Esophagus muscularis mucosa (tissue), 4 donors: ENCODE measurements at regions of chr7 and their contacts with region 1.

Region 1: DNA sequence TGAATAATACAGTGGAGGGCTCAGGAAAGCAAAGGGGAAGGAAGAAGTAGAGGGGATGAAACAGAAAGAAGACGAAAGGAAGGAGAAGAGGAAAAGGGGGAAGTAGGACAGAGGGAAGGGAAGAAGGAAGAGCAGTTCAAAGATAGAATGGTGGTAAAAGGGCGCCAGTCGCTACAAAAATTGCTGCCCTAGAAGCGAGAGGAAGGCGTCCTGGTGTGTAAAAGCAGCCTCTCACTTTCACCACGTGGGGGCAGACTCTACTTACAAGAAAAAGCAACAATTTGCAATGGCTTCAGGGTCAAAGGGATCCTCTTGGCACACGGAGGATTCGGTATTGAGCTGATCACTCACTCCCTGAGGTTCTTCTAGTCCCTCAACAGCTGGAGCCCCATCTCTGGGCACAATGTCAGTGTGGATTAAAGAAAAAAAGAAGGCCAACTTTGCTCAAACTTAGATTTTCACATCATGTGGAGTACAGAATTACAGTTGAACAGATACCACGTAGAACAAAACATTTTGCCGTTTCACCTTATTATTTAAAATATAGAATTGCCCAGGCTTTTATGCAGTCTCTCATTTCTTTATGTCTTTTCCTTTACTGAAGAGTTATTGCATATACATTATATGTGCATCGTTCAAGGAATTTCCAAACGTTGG is 31.4 kb upstream of the NPVF start:
- DNase-seq: no peak
- H3K4me3 ChIP-seq: no peak overlapping the region
- H3K27ac ChIP-seq: no peak overlapping the region
- H3K4me1 ChIP-seq: peaks cover 4 to 25% (median 24%) of the 10 kb centered on the region in 4 donors
- H3K27me3 ChIP-seq: no peaks in the 10 kb centered on the region
- CTCF ChIP-seq: peak; percentile 81 to 91 (median 89)
- EP300 ChIP-seq: no peak
- POLR2A ChIP-seq: no peak

Region 2: GRCh38 chr7:24366876-24367275 is 892.8 kb before region 1 on chr7:
- intact Hi-C with region 1: no loop called
- DNase-seq: no peak
- H3K4me3 ChIP-seq: no peak overlapping the region
- H3K27ac ChIP-seq: no peak overlapping the region
- H3K4me1 ChIP-seq: no peaks in the 10 kb centered on the region
- H3K27me3 ChIP-seq: no peaks in the 10 kb centered on the region
- CTCF ChIP-seq: no peak
- EP300 ChIP-seq: no peak
- POLR2A ChIP-seq: no peak

Region 3: GRCh38 chr7:25125137-25125946 is 134.4 kb before region 1 on chr7 and contains the start of gene CYCS:
- intact Hi-C with region 1: no loop called
- DNase-seq: peak; percentile 100
- H3K4me3 ChIP-seq: peak within 1 kb of the TSS; percentile 80 to 89 (median 84)
- H3K27ac ChIP-seq: peak within 1 kb of the TSS; percentile 95 to 97 (median 96)
- H3K4me1 ChIP-seq: peaks cover 10 to 22% (median 15%) of the 10 kb centered on the region in 4 donors
- H3K27me3 ChIP-seq: no peaks in the 10 kb centered on the region
- CTCF ChIP-seq: peak in 1 of 3 experiments; percentile 16
- EP300 ChIP-seq: peak; percentile 90
- POLR2A ChIP-seq: peak; percentile 95
- total RNA-seq, gene CYCS: 39.9 to 57.3 (median 44.6) TPM

Region 4: GRCh38 chr7:25389489-25390106 is 129.9 kb after region 1 on chr7:
- intact Hi-C with region 1: loop called (anchors 1 kb)
- DNase-seq: peak; percentile 53
- H3K4me3 ChIP-seq: no peak overlapping the region
- H3K27ac ChIP-seq: peak overlapping the region in 1 of 4 donors; percentile 12
- H3K4me1 ChIP-seq: peaks cover 5 to 78% (median 68%) of the 10 kb centered on the region in 4 donors
- H3K27me3 ChIP-seq: no peaks in the 10 kb centered on the region
- CTCF ChIP-seq: peak; percentile 59 to 66 (median 62)
- EP300 ChIP-seq: no peak
- POLR2A ChIP-seq: no peak

Region 5: GRCh38 chr7:25565949-25566348 is 306.2 kb after region 1 on chr7:
- intact Hi-C with region 1: loop called (anchors 2 kb)
- DNase-seq: peak; percentile 94
- H3K4me3 ChIP-seq: no peak overlapping the region
- H3K27ac ChIP-seq: peak overlapping the region in 1 of 4 donors; percentile 52
- H3K4me1 ChIP-seq: peaks cover 2 to 41% (median 36%) of the 10 kb centered on the region in 4 donors
- H3K27me3 ChIP-seq: no peaks in the 10 kb centered on the region
- CTCF ChIP-seq: peak; percentile 100
- EP300 ChIP-seq: no peak
- POLR2A ChIP-seq: no peak